Breast epithelium (tissue), 4 donors: ENCODE measurements at regions of chr5 and their contacts with region 1.

Region 1: GRCh38 chr5:144927824-144928223 is 757.2 kb downstream of the KCTD16 start:
- DNase-seq: no peak
- H3K4me3 ChIP-seq: no peak overlapping the region
- H3K27ac ChIP-seq: no peak overlapping the region
- H3K4me1 ChIP-seq: no peaks in the 10 kb centered on the region
- H3K27me3 ChIP-seq: no peaks in the 10 kb centered on the region
- CTCF ChIP-seq: no peak
- POLR2A ChIP-seq: no peak

Region 2: DNA sequence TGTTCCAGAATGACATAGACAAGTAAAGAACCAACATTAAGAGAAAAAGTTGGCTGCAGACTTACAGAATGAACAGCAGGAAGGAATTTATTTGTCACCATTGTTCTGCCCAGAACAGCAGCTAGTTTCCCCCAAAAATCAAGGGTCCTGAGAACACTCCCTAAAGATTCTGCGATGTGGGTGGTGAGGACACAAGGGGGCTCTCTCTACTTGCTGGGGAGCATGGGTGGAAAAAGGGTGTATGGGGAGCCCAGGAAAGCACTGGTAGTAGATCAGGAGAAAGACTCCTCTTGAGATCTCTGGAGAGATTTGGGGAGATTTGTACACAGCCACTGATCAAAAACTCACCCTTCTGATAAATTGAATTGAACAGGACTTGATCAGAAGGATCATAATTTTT is 440.6 kb before region 1 on chr5:
- intact Hi-C with region 1: no loop called
- DNase-seq: no peak
- H3K4me3 ChIP-seq: no peak overlapping the region
- H3K27ac ChIP-seq: no peak overlapping the region
- H3K4me1 ChIP-seq: no peaks in the 10 kb centered on the region
- H3K27me3 ChIP-seq: no peaks in the 10 kb centered on the region
- CTCF ChIP-seq: no peak
- POLR2A ChIP-seq: no peak

Region 3: GRCh38 chr5:144638787-144639186 is 289.0 kb before region 1 on chr5:
- intact Hi-C with region 1: loop called (anchors 5 kb)
- DNase-seq: no peak
- H3K4me3 ChIP-seq: no peak overlapping the region
- H3K27ac ChIP-seq: no peak overlapping the region
- H3K4me1 ChIP-seq: no peaks in the 10 kb centered on the region
- H3K27me3 ChIP-seq: no peaks in the 10 kb centered on the region
- CTCF ChIP-seq: no peak
- POLR2A ChIP-seq: no peak